Activated CD4-positive, alpha-beta memory T cell treated with anti-CD3 and anti-CD28 coated beads for 36 hours (primary cell): ENCODE measurements at regions of chr5 and their contacts with region 1.

Region 1: GRCh38 chr5:157743163-157744050 is at the start of gene LSM11:
- DNase-seq: peak; percentile 94
- H3K4me3 Mint-ChIP-seq: peak within 1 kb of the TSS; percentile 87
- H3K27ac Mint-ChIP-seq: peak within 1 kb of the TSS; percentile 55
- H3K4me1 Mint-ChIP-seq: peaks cover 43% of the 10 kb centered on the region
- H3K27me3 Mint-ChIP-seq: no peaks in the 10 kb centered on the region
- total RNA-seq, gene LSM11: 7.4 to 8.0 TPM

Region 2: GRCh38 chr5:157342822-157343402 is 400.5 kb before region 1 on chr5:
- CTCF ChIA-PET with region 1: interaction called, 21 read pairs
- POLR2A ChIA-PET with region 1: no interaction called
- intact Hi-C with region 1: loop called (anchors 1 kb)
- DNase-seq: peak; percentile 52
- H3K4me3 Mint-ChIP-seq: no peak overlapping the region
- H3K27ac Mint-ChIP-seq: peak overlapping the region; percentile 91
- H3K4me1 Mint-ChIP-seq: peaks cover 39% of the 10 kb centered on the region
- H3K27me3 Mint-ChIP-seq: no peaks in the 10 kb centered on the region

Region 3: GRCh38 chr5:157471709-157472108 is 271.7 kb before region 1 on chr5:
- CTCF ChIA-PET with region 1: interaction called, 11 read pairs
- POLR2A ChIA-PET with region 1: no interaction called
- intact Hi-C with region 1: loop called (anchors 5 kb)
- DNase-seq: peak; percentile 40
- H3K4me3 Mint-ChIP-seq: no peak overlapping the region
- H3K27ac Mint-ChIP-seq: no peak overlapping the region
- H3K4me1 Mint-ChIP-seq: no peaks in the 10 kb centered on the region
- H3K27me3 Mint-ChIP-seq: no peaks in the 10 kb centered on the region

Region 4: DNA sequence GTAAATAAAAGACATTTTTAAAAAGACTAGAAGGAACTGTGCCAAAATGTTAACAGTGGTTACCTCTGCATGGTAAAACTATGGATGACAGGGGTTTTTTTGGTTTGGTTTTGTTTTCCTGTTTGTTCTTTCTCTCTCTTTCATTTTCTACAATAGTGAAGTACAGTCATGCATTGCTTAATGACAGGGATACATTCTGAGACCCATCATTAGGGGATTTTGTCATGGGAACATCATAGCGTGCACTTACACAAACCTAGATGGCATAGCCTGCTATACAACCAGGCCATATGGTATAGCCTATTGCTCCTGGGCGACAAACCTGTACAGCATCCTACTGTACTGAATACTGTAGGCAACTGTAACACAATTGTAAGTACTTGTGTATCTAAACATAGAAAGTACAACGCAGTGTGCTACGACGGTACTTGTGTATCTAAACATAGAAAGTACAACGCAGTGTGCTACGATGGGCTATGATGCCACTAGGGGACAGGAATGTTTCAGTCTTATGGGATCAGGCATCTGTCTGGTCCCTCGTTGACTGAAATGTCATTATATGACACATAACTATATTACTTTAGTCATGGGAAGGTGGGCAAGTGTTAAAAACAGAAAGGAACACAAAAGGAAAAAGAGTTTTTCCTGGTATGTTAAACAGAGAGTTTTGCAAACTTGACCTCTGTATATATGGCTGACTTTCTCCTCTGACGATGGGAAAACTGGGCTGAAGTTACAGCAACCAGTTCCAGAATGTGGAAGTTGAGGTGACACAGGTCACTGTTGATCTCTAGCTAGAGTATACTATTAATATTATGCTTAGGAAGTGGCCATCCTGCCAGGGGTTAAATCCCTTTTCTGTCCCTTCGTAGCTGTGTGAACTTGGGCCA is 160.4 kb before region 1 on chr5:
- CTCF ChIA-PET with region 1: interaction called, 10 read pairs
- POLR2A ChIA-PET with region 1: no interaction called
- intact Hi-C with region 1: loop called (anchors 5 kb)
- DNase-seq: no peak
- H3K4me3 Mint-ChIP-seq: no peak overlapping the region
- H3K27ac Mint-ChIP-seq: peak overlapping the region; percentile 72
- H3K4me1 Mint-ChIP-seq: peaks cover 50% of the 10 kb centered on the region
- H3K27me3 Mint-ChIP-seq: no peaks in the 10 kb centered on the region

Region 5: GRCh38 chr5:157651623-157652549 is 91.5 kb before region 1 on chr5 and contains the start of gene SOX30:
- CTCF ChIA-PET with region 1: interaction called, 12 read pairs
- POLR2A ChIA-PET with region 1: no interaction called
- intact Hi-C with region 1: loop called (anchors 1 kb)
- DNase-seq: peak; percentile 91
- H3K4me3 Mint-ChIP-seq: peak within 1 kb of the TSS; percentile 76
- H3K27ac Mint-ChIP-seq: peak within 1 kb of the TSS; percentile 79
- H3K4me1 Mint-ChIP-seq: peaks cover 17% of the 10 kb centered on the region
- H3K27me3 Mint-ChIP-seq: no peaks in the 10 kb centered on the region
- total RNA-seq, gene SOX30: 0.65 to 0.93 TPM

Region 6: DNA sequence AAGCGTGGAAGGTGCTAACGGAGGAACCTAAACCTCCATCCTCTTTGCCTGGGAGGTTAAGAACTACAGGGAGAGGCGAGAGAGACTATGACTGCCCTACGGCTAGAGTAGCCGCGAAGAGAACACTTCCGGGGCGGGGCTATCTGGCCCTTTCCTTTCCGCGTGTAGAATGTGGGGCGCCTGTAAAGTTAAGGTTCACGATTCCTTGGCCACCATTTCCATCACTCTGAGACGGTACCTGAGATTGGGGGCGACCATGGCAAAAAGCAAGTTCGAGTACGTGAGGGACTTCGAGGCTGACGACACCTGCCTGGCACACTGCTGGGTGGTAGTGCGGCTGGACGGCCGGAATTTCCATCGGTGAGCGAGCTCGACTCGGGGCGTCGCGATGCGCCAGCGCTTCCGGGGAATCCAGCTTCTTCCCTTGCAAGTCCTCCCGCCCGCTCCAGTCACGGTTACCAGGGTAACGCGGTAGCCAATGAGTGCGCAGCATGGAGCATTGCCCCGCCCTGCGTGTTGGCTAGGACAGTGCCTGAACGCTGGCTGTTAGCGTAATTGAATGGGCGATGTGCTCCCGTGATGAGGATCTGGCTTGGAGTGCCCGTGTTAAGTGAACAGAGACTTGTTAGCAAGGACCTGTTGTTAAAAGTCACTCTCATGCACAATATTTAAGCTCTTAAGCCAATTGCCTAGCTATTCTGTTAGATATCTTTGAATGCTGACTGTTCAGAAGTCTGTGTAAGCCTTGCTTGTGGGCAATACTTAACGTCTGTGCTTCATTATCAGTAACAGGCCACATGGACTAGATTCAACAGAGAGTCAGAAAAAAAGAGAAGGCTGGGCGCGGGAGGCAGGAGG is 11.9 kb before region 1 on chr5 and contains the start of gene THG1L:
- CTCF ChIA-PET with region 1: interaction called, 49 read pairs
- POLR2A ChIA-PET with region 1: interaction called, 9 read pairs
- intact Hi-C with region 1: loop called (anchors 1 kb)
- DNase-seq: peak; percentile 100
- H3K4me3 Mint-ChIP-seq: peak within 1 kb of the TSS; percentile 95
- H3K27ac Mint-ChIP-seq: peak within 1 kb of the TSS; percentile 97
- H3K4me1 Mint-ChIP-seq: peaks cover 33% of the 10 kb centered on the region
- H3K27me3 Mint-ChIP-seq: no peaks in the 10 kb centered on the region
- total RNA-seq, gene THG1L: 28.6 to 33.5 TPM